Posterior cingulate gyrus (tissue), 11 donors: ENCODE measurements at regions of chr6 and their contacts with region 1.

Region 1: DNA sequence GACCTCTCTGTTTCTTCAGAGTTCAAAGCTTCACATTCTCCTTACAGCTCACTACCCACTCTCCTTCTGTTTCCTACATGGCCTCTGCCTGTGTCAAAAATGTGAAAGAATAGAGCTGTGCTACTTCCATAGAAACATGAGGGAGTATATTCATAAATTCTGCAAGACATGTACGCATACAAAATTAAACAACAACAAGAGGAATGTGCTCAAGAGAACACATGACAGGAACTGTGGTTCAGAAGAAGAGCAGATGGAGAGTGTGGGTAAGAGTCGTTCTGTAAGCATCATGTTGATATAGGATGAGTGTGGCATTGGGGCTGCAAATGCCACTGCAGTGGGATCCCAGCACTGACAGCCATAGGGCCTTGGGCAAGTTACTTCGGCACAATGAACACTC is 266.6 kb upstream of the SASH1 start:
- DNase-seq: no peak

Region 2: GRCh38 chr6:147855803-147856482 is 220.1 kb before region 1 on chr6:
- intact Hi-C with region 1: no loop called
- DNase-seq: no peak

Region 3: GRCh38 chr6:148090326-148090725 is 14.3 kb after region 1 on chr6:
- intact Hi-C with region 1: loop called (anchors 1 kb)
- DNase-seq: no peak

Region 4: GRCh38 chr6:148192310-148192709 is 116.3 kb after region 1 on chr6:
- intact Hi-C with region 1: no loop called
- DNase-seq: no peak